ENCODE measurements at regions of chr10 and their contacts with region 1.

Region 1: GRCh38 chr10:77165445-77166208 is 472.0 kb downstream of the KCNMA1 start:
- DNase-seq: no peak
- H3K4me3 ChIP-seq: no peak overlapping the region
- H3K27ac ChIP-seq: no peak overlapping the region
- H3K27me3 ChIP-seq: no peaks in the 10 kb centered on the region
- CTCF ChIP-seq: peak; percentile 79

Region 2: DNA sequence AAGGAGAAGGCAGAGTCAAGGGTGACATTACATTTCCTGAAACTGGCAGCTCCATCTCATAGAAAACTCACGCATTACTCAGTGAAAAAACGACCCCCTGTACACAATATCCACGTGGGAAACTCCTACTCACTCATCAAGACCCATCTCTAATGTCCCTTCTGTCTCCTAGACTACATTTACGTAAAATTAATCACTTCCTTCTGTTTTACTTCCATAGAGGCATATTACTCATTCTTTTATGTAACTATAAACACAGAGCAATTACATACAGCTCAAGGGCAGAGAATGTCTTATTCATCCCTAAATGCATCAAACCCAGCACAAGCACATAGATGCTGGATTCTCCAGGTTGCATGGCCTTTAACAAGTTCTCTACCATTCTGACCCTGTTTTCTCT is 190.2 kb after region 1 on chr10:
- CTCF ChIA-PET with region 1: interaction called, 11 read pairs
- POLR2A ChIA-PET with region 1: no interaction called
- DNase-seq: peak; percentile 64
- H3K4me3 ChIP-seq: no peak overlapping the region
- H3K27ac ChIP-seq: peak overlapping the region; percentile 43
- H3K27me3 ChIP-seq: no peaks in the 10 kb centered on the region
- CTCF ChIP-seq: no peak

Region 3: DNA sequence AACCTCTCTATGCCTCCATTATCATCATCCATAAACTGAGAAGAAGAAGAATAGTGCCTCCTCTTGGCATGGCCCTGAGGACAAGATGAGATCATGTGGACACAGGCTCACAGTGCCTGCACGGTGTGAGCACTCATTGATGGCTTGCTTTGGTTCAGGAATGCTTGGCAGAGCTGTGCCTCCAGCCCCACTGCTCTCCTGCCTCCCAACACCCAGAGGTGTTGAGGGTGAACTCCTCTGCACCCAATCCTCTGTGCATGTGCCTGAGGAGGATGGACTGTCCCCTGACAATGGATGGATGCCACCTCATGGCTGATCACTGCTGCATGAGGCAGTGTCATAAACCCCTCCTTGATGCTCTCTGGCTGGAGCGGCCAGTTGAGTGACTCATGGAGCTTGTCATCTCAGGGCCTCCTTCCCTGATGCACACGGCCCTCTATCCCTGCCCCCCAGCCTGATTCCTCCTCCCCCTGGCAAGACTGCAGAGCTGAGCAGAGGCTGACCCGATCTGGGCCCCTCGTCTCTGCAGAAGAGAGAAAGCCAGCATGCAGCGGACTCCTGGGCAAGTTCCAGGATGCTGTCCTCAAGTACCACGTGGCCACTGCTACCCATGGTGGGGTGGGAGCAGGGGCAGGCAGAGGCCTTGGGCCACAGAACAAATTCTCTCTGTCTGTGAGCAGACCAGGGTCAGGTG is 335.7 kb after region 1 on chr10:
- CTCF ChIA-PET with region 1: interaction called, 10 read pairs
- POLR2A ChIA-PET with region 1: no interaction called
- DNase-seq: peak; percentile 63
- H3K4me3 ChIP-seq: no peak overlapping the region
- H3K27ac ChIP-seq: peak overlapping the region; percentile 83
- H3K27me3 ChIP-seq: no peaks in the 10 kb centered on the region
- CTCF ChIP-seq: no peak

Region 4: GRCh38 chr10:77641788-77642397 is 476.3 kb after region 1 on chr10:
- CTCF ChIA-PET with region 1: interaction called, 199 read pairs
- POLR2A ChIA-PET with region 1: interaction called, 5 read pairs
- DNase-seq: peak; percentile 53
- H3K4me3 ChIP-seq: no peak overlapping the region
- H3K27ac ChIP-seq: no peak overlapping the region
- H3K27me3 ChIP-seq: peaks cover 4% of the 10 kb centered on the region
- CTCF ChIP-seq: peak; percentile 77

Region 5: GRCh38 chr10:77710759-77711682 is 545.4 kb after region 1 on chr10:
- CTCF ChIA-PET with region 1: interaction called, 95 read pairs
- POLR2A ChIA-PET with region 1: no interaction called
- DNase-seq: no peak
- H3K4me3 ChIP-seq: peak overlapping the region; percentile 59
- H3K27ac ChIP-seq: no peak overlapping the region
- H3K27me3 ChIP-seq: peaks cover 7% of the 10 kb centered on the region
- CTCF ChIP-seq: peak; percentile 95

Region 6: DNA sequence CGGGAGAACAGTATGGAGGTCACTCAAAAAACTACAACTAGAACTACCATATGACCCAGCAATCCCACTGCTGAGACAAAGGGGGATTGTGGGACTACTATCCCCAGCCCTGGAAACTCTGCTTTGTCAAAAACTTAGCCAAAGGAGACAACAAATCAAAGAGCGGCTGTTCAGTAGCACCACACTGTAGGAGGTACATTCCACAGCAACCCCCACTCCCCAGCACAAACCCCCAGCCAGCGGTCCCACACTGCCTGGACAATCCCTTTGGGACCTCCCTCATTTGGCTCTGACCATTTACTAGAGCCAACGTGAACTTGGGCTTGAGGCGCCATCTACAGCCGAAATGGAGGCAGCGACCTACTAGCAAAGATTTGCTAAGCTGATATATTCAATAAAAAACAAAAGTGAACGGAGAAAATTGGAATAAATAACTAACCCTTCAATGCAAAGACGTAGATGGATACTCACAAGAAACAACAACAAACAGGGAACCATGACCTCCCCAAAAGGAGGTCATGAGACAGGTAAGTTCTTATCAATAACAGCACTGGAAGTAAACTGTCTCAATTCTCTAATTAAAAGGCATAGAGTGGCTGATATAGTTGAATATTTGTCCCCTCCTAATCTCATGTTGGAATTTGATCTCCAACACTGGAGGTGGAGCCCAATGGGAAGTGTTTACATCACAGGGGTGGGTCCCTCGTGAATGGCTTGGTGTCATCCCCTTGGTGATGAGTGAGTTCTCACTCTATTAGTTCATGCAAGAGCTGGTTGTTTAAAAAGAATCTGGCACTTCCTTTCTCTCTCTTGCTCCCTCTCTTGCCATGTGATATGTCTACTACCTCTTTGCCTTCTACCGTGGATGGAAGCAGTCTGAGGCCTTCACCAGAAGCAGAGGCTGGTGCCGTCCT is 590.9 kb after region 1 on chr10:
- CTCF ChIA-PET with region 1: interaction called, 25 read pairs
- POLR2A ChIA-PET with region 1: no interaction called
- DNase-seq: peak; percentile 43
- H3K4me3 ChIP-seq: no peak overlapping the region
- H3K27ac ChIP-seq: no peak overlapping the region
- H3K27me3 ChIP-seq: no peaks in the 10 kb centered on the region
- CTCF ChIP-seq: peak; percentile 89